WTC11 (cell line): ENCODE measurements at regions of chr9 and their contacts with region 1.

Region 1: GRCh38 chr9:36995927-36996705 is 38.0 kb downstream of the PAX5 start:
- DNase-seq: peak; percentile 88
- ATAC-seq: peak; percentile 88
- H3K4me3 Mint-ChIP-seq: peak overlapping the region; percentile 37
- H3K27ac Mint-ChIP-seq: no peak overlapping the region
- H3K4me1 Mint-ChIP-seq: peaks cover 21% of the 10 kb centered on the region
- H3K27me3 Mint-ChIP-seq: peaks cover 43% of the 10 kb centered on the region
- CTCF ChIP-seq: peak; percentile 45; the same call in 1 of the 2 replicates

Region 2: GRCh38 chr9:36603006-36603405 is 393.1 kb before region 1 on chr9:
- CTCF ChIA-PET with region 1: no interaction called
- POLR2A ChIA-PET with region 1: no interaction called
- DNase-seq: no peak
- ATAC-seq: no peak
- H3K4me3 Mint-ChIP-seq: no peak overlapping the region
- H3K27ac Mint-ChIP-seq: no peak overlapping the region
- H3K4me1 Mint-ChIP-seq: no peaks in the 10 kb centered on the region
- H3K27me3 Mint-ChIP-seq: no peaks in the 10 kb centered on the region
- CTCF ChIP-seq: no peak

Region 3: DNA sequence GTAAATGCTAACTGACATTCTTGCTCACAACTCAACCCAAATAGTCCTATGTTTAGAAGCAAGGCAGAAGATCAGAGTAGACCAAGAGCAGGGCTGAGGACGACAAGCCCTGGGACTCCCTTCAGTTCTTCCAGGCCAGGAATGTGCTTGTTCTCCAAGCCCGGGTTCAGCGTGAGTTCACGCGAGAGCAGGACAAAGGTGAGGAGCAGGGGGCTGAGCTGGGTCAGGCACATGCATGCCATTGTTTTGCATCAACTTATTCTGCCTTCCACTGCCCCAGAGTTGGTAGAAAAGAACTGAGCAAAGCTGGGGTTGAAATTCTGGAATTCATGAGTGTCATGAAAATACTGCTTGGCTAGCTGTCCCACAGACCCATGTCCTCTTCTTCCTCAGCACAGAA is 168.5 kb before region 1 on chr9:
- CTCF ChIA-PET with region 1: no interaction called
- POLR2A ChIA-PET with region 1: no interaction called
- DNase-seq: no peak
- ATAC-seq: peak; percentile 46
- H3K4me3 Mint-ChIP-seq: no peak overlapping the region
- H3K27ac Mint-ChIP-seq: no peak overlapping the region
- H3K4me1 Mint-ChIP-seq: peaks cover 22% of the 10 kb centered on the region
- H3K27me3 Mint-ChIP-seq: no peaks in the 10 kb centered on the region
- CTCF ChIP-seq: no peak

Region 4: GRCh38 chr9:36855448-36856315 is 140.4 kb before region 1 on chr9:
- CTCF ChIA-PET with region 1: interaction called, 27 read pairs
- POLR2A ChIA-PET with region 1: no interaction called
- DNase-seq: peak; percentile 77
- ATAC-seq: peak; percentile 90
- H3K4me3 Mint-ChIP-seq: no peak overlapping the region
- H3K27ac Mint-ChIP-seq: no peak overlapping the region
- H3K4me1 Mint-ChIP-seq: peaks cover 37% of the 10 kb centered on the region
- H3K27me3 Mint-ChIP-seq: no peaks in the 10 kb centered on the region; the same call in 1 of the 2 replicates
- CTCF ChIP-seq: peak; percentile 37; the same call in 1 of the 2 replicates

Region 5: GRCh38 chr9:36873247-36873875 is 122.8 kb before region 1 on chr9:
- CTCF ChIA-PET with region 1: interaction called, 232 read pairs
- POLR2A ChIA-PET with region 1: interaction called, 3 read pairs
- DNase-seq: peak; percentile 83
- ATAC-seq: peak; percentile 93
- H3K4me3 Mint-ChIP-seq: no peak overlapping the region
- H3K27ac Mint-ChIP-seq: no peak overlapping the region
- H3K4me1 Mint-ChIP-seq: peaks cover 8% of the 10 kb centered on the region
- H3K27me3 Mint-ChIP-seq: no peaks in the 10 kb centered on the region
- CTCF ChIP-seq: peak; percentile 88

Region 6: DNA sequence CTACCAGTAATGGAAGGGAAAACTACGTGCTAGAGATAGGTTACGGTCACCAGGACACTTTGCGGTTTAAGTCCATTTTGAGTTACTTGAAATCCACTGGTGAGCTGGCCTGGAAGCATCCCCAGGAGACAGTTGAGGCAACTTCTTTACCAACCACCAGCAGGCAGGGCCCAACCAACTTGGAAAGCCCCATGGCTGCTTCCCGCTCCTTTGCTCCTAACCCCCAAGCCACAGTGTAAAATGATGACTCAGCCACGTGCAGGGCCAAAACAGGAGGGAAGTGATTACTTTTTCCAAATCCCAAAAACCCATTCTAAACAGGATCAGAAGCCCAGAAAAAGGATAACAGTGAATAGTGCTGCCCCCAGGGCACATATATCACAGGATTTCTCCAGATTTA is 49.5 kb before region 1 on chr9:
- CTCF ChIA-PET with region 1: no interaction called
- POLR2A ChIA-PET with region 1: no interaction called
- DNase-seq: no peak
- ATAC-seq: no peak
- H3K4me3 Mint-ChIP-seq: no peak overlapping the region
- H3K27ac Mint-ChIP-seq: no peak overlapping the region
- H3K4me1 Mint-ChIP-seq: peaks cover 27% of the 10 kb centered on the region
- H3K27me3 Mint-ChIP-seq: no peaks in the 10 kb centered on the region
- CTCF ChIP-seq: no peak

Region 7: GRCh38 chr9:37027582-37028419 is 31.7 kb after region 1 on chr9:
- CTCF ChIA-PET with region 1: interaction called, 30 read pairs
- POLR2A ChIA-PET with region 1: no interaction called
- DNase-seq: peak; percentile 99
- ATAC-seq: peak; percentile 88
- H3K4me3 Mint-ChIP-seq: peak overlapping the region; percentile 87
- H3K27ac Mint-ChIP-seq: no peak overlapping the region
- H3K4me1 Mint-ChIP-seq: peaks cover 50% of the 10 kb centered on the region
- H3K27me3 Mint-ChIP-seq: peaks cover 99% of the 10 kb centered on the region
- CTCF ChIP-seq: no peak

Region 8: GRCh38 chr9:37220971-37221370 is 224.9 kb after region 1 on chr9:
- CTCF ChIA-PET with region 1: no interaction called
- POLR2A ChIA-PET with region 1: no interaction called
- DNase-seq: no peak
- ATAC-seq: no peak
- H3K4me3 Mint-ChIP-seq: no peak overlapping the region
- H3K27ac Mint-ChIP-seq: no peak overlapping the region; the same call in 1 of the 2 replicates
- H3K4me1 Mint-ChIP-seq: peaks cover 16% of the 10 kb centered on the region
- H3K27me3 Mint-ChIP-seq: no peaks in the 10 kb centered on the region
- CTCF ChIP-seq: no peak

Region 9: DNA sequence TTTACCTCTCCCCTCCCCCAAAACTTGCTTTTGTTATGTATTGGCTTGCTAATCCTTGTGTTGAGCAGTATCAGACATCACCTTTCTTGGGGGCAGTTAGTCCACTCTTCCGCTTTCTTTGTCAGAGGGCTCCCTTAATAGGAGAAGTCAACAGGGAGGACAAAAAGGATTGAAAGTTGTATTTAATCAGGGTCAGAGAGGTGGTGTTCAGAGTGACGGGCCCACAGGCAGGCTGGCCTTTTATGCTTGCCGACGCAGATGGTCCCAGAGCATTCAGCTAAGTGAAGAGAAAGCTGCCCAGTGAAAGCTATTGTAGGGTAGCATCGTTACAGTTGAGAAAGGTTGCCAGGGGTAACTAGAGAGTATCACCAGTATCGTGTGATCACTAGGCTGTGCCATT is 255.3 kb after region 1 on chr9:
- CTCF ChIA-PET with region 1: interaction called, 11 read pairs
- POLR2A ChIA-PET with region 1: no interaction called
- DNase-seq: peak; percentile 68
- ATAC-seq: peak; percentile 97
- H3K4me3 Mint-ChIP-seq: peak overlapping the region; percentile 54
- H3K27ac Mint-ChIP-seq: peak overlapping the region; percentile 99
- H3K4me1 Mint-ChIP-seq: peaks cover 81% of the 10 kb centered on the region
- H3K27me3 Mint-ChIP-seq: no peaks in the 10 kb centered on the region
- CTCF ChIP-seq: no peak

Region 10: DNA sequence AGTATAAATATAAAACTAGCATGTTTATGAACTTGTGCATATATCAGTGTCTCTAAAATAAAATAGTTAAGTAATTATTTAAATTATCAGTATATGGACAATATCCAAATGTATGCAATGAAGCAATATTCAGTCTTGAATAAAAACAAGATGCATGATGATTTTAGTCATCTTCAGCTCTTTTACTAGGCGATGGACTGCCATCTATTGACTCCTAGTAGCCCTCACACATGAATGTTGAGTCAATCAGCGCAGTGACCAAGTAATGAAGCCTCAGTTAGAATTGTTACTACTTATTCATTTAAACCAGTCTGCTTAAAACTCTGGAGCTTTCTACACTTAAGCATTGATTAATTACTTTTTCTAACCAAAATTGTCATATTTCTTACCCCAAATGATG is 333.5 kb after region 1 on chr9:
- CTCF ChIA-PET with region 1: interaction called, 26 read pairs
- POLR2A ChIA-PET with region 1: no interaction called
- DNase-seq: no peak
- ATAC-seq: no peak
- H3K4me3 Mint-ChIP-seq: no peak overlapping the region
- H3K27ac Mint-ChIP-seq: no peak overlapping the region
- H3K4me1 Mint-ChIP-seq: peaks cover 2% of the 10 kb centered on the region
- H3K27me3 Mint-ChIP-seq: no peaks in the 10 kb centered on the region
- CTCF ChIP-seq: no peak

Region 11: DNA sequence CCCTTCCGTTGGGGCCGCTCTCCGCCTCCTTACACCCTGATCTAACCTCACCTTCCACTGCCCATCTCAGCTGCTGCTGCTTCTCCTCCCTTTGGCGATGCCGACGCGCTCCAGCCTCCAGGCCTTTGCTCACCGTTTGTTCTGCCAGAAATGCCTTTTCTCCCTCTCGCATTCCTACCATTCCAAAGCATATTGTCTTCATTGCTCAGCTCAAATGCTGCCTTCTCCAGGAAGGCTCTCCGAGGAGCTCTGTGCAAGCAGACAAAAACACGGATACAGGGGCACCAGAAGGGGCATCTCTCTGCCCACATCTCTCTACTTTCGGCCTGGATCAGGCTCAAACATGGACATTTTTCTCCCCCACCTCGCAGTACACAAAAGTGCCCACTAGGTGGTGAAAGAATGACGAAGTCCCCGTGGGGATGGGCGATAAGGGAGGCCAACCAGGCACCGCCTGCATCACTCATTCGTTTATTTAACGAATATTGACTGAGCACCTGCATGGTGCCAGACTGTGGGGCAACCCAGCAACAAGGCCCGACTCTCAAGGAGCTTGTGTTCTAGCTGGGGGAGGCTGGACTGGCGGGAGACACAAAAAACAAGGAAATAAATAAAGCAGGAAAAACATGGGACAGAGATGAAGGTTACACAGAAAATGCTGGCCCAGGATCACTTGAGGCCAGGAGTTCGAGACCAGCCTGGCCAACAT is 419.0 kb after region 1 on chr9:
- CTCF ChIA-PET with region 1: interaction called, 41 read pairs
- POLR2A ChIA-PET with region 1: no interaction called
- DNase-seq: peak; percentile 75
- ATAC-seq: peak; percentile 70
- H3K4me3 Mint-ChIP-seq: peak overlapping the region; percentile 40
- H3K27ac Mint-ChIP-seq: peak overlapping the region; percentile 81
- H3K4me1 Mint-ChIP-seq: peaks cover 45% of the 10 kb centered on the region
- H3K27me3 Mint-ChIP-seq: peaks cover 2% of the 10 kb centered on the region; the same call in 1 of the 2 replicates
- CTCF ChIP-seq: peak; percentile 67